Naive thymus-derived CD4-positive, alpha-beta T cell (primary cell): ENCODE measurements at regions of chr1 and their contacts with region 1.

Region 1: DNA sequence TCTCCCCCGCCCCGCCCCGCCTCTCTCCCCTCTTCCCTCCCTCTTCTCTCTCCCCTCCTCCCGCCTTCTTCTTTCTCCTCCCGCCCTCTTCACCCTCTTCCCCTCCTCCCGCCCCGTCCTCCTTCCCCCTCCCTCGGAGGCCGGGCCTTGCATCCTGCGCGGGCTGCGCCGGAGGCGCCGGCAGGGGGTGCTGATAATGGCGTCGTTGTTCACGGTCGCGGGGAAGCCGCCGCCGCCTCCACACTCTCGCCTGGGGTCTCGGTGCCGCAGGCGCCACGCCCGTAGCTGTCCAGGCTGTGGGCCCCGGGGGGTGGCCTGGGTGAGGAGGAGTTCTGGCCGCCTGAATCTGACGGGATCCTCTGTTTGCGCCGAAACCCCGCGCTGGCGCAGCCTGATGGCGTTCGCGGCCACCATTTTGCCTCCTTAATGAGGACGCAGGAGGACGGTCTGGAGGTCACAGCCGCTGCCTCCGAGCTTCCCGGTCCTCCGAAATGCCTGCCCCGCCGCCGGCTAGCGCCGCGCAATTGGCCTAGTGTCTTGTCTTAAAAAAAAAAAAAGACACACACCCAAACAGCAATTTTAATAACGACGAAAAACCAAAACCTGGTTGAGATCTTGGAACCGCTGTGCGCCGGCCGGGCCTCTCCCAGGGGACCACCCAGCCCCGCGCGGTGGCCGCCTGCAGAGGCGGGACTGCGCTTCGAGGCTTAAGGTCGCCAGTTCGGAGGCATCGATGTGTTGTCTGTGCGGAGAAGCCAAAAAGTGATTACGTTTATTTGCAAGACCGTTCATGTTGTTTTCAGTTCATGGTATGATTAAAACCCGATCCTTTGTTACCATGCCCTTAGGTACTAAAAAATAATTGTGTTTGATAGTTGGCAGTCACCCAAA is 106.6 kb upstream of the HNRNPU start:
- DNase-seq: peak; percentile 91 to 97 (median 95)
- ATAC-seq: peak; percentile 88
- H3K4me3 ChIP-seq: peak overlapping the region; percentile 81
- H3K4me3 Mint-ChIP-seq: peak overlapping the region; percentile 91 to 95 (median 93)
- H3K27ac ChIP-seq: peak overlapping the region; percentile 99
- H3K27ac Mint-ChIP-seq: peak overlapping the region; percentile 97 to 100 (median 99)
- H3K4me1 ChIP-seq: peaks cover 5 to 12% of the 10 kb centered on the region in 2 donors
- H3K4me1 Mint-ChIP-seq: peaks cover 7 to 31% (median 25%) of the 10 kb centered on the region in 7 donors
- H3K27me3 ChIP-seq: no peaks in the 10 kb centered on the region
- H3K27me3 Mint-ChIP-seq: peaks cover 0 to 14% (median 0%) of the 10 kb centered on the region in 5 donors

Region 2: GRCh38 chr1:244461245-244462071 is 509.4 kb before region 1 on chr1 and contains the start of gene CATSPERE:
- CTCF ChIA-PET with region 1: no interaction called
- POLR2A ChIA-PET with region 1: interaction called, 4 read pairs
- intact Hi-C with region 1: loop called in 1 of 2 experiments (anchors 2 kb)
- DNase-seq: peak; percentile 55 to 79 (median 76)
- ATAC-seq: peak; percentile 99
- H3K4me3 ChIP-seq: peak within 1 kb of the TSS; percentile 77
- H3K4me3 Mint-ChIP-seq: peak within 1 kb of the TSS; percentile 69 to 89 (median 82)
- H3K27ac ChIP-seq: peak within 1 kb of the TSS; percentile 78
- H3K27ac Mint-ChIP-seq: peak within 1 kb of the TSS; percentile 78 to 97 (median 90)
- H3K4me1 ChIP-seq: peaks cover 5 to 6% of the 10 kb centered on the region in 2 donors
- H3K4me1 Mint-ChIP-seq: peaks cover 6 to 16% (median 13%) of the 10 kb centered on the region in 7 donors
- H3K27me3 ChIP-seq: no peaks in the 10 kb centered on the region
- H3K27me3 Mint-ChIP-seq: peaks cover 0 to 2% (median 0%) of the 10 kb centered on the region in 5 donors
- total RNA-seq, gene CATSPERE: 0.77 to 2.2 (median 1.7) TPM

Region 3: GRCh38 chr1:244801246-244801645 is 169.7 kb before region 1 on chr1:
- CTCF ChIA-PET with region 1: interaction called, 3 read pairs
- POLR2A ChIA-PET with region 1: interaction called, 3 read pairs
- intact Hi-C with region 1: loop called in 1 of 2 experiments (anchors 1 kb)
- DNase-seq: peak; percentile 14 to 63 (median 45)
- ATAC-seq: peak; percentile 86
- H3K4me3 ChIP-seq: no peak overlapping the region
- H3K4me3 Mint-ChIP-seq: peak overlapping the region in 4 of 10 donors; percentile 32 to 47 (median 40)
- H3K27ac ChIP-seq: no peak overlapping the region
- H3K27ac Mint-ChIP-seq: peak overlapping the region in 2 of 9 donors; percentile 36 to 77
- H3K4me1 ChIP-seq: no peaks in the 10 kb centered on the region
- H3K4me1 Mint-ChIP-seq: peaks cover 0 to 5% (median 3%) of the 10 kb centered on the region in 7 donors
- H3K27me3 ChIP-seq: no peaks in the 10 kb centered on the region
- H3K27me3 Mint-ChIP-seq: peaks cover 0 to 4% (median 0%) of the 10 kb centered on the region in 5 donors

Region 4: DNA sequence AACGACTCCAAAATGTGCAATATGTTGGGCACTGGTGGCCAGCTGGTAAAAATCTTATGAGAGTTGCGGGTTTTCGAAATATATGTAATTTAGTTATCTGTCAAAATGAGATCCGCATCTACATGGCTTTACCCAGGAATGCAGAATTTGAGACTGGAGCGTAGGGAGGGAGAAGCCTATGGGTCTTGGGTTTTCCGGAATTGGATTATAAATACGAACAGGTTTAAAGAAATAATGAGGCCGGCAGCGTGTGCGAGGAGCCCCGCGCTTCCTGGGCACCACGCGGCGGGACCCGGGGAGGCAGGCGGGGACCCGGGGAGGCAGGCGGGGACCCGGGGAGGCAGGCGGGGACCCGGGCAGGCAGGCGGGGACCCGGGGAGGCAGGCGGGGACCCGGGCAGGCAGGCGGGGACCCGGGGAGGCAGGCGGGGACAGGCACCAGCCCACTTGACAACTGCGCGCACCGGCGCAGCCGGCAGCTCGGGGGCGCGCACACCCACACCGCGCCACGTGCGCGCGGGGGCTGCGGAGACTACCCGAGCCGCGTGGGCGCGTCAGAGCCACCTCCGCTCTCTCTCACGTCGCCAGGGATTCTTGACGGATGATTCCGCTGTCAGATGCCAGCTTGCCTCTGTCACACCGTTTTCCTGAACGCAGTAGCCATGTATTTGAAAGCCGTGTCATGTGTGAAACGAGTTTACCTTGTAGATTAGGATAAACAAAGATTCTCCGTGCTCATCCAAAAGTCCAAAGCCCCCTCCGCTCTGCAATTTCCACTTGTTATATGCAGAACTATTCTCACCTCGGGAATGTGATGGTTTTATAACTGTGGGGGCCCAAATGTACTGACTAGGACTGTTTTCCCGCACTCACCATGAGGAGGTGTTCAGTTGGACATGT is 52.2 kb before region 1 on chr1:
- CTCF ChIA-PET with region 1: interaction called, 3 read pairs
- POLR2A ChIA-PET with region 1: interaction called, 5 read pairs
- intact Hi-C with region 1: loop called (anchors 1 kb)
- DNase-seq: peak; percentile 66 to 85 (median 79)
- ATAC-seq: peak; percentile 98
- H3K4me3 ChIP-seq: peak overlapping the region; percentile 62
- H3K4me3 Mint-ChIP-seq: peak overlapping the region; percentile 88 to 96 (median 92)
- H3K27ac ChIP-seq: peak overlapping the region; percentile 56
- H3K27ac Mint-ChIP-seq: peak overlapping the region in 8 of 9 donors; percentile 73 to 96 (median 90)
- H3K4me1 ChIP-seq: peaks cover 6 to 7% of the 10 kb centered on the region in 2 donors
- H3K4me1 Mint-ChIP-seq: peaks cover 0 to 15% (median 10%) of the 10 kb centered on the region in 7 donors
- H3K27me3 ChIP-seq: no peaks in the 10 kb centered on the region
- H3K27me3 Mint-ChIP-seq: peaks cover 0 to 33% (median 0%) of the 10 kb centered on the region in 5 donors

Region 5: GRCh38 chr1:245953876-245954660 is 983.2 kb after region 1 on chr1:
- CTCF ChIA-PET with region 1: no interaction called
- POLR2A ChIA-PET with region 1: no interaction called
- intact Hi-C with region 1: loop called (anchors 5 to 10 kb)
- DNase-seq: peak in 6 of 9 donors; percentile 17 to 49 (median 34)
- ATAC-seq: peak; percentile 45
- H3K4me3 ChIP-seq: peak overlapping the region; percentile 31
- H3K4me3 Mint-ChIP-seq: peak overlapping the region in 8 of 10 donors; percentile 56 to 90 (median 78)
- H3K27ac ChIP-seq: peak overlapping the region; percentile 76
- H3K27ac Mint-ChIP-seq: peak overlapping the region in 1 of 9 donors; percentile 97
- H3K4me1 ChIP-seq: peaks cover 25 to 27% of the 10 kb centered on the region in 2 donors
- H3K4me1 Mint-ChIP-seq: peaks cover 9 to 29% (median 19%) of the 10 kb centered on the region in 7 donors
- H3K27me3 ChIP-seq: no peaks in the 10 kb centered on the region
- H3K27me3 Mint-ChIP-seq: no peaks in the 10 kb centered on the region